ENCODE measurements at regions of chr2 and their contacts with region 1.

Region 1: DNA sequence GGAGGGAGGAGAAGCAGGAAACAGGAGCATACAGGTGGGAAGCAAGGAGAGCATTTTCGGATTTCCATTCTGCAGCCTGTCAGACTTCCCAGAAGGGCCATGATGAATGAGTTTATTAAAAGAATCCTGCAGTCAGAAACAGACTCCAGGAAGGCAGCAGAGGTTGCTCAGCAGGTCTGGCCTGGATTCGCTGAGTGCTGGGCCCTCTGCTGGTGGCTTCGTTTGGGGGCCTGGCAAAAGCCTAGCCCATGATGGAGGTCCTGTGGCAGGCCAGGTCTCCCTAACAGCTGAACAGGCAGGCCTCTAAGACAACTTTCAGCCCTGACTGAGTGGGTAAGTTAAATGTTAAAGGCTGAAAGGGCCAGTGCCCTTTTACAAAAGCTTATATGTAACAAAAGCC is 108.2 kb upstream of the CAPN13 start:
- DNase-seq: peak; percentile 77
- H3K4me3 ChIP-seq: no peak overlapping the region
- H3K27ac ChIP-seq: peak overlapping the region in 1 of 2 experiments; percentile 71; a peak in 2 of 4 replicates
- H3K4me1 ChIP-seq: peaks cover 0 to 11% of the 10 kb centered on the region in 2 experiments; a peak in 1 of 4 replicates
- H3K27me3 ChIP-seq: no peaks in the 10 kb centered on the region
- CTCF ChIP-seq: peak; percentile 22; the same call in 1 of the 2 replicates
- EP300 ChIP-seq: 0 out of 4 replicates have a peak, but pooled peaks of 1 of the 2 experiments have one; percentile 21
- RAD21 ChIP-seq: peak; percentile 71

Region 2: DNA sequence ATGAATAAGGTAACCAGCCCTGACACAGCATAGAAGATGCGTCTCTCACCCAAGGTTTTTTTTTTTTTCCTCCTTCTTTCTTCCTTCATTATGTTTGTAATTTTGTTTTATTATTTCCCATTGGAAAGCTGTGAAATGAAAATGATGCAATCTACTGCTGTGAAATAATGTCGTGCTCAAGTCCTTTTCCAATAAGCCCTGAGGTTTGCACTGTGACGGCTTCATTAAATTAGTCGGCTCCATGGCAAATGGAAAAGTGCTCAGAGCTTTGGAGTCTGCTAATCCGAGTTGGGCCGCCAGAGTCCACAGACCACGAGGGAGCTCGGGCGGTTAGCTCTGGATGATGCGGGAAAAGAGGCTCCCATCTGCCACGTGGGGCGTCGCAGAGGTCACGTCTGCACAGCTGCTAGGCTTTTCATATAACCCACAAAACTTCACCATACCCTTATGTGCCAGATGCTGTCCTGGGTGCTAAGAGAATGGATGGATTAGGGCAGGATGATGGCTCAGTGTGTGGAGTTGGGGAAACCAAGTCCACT is 15.9 kb before region 1 on chr2:
- CTCF ChIA-PET with region 1: interaction called, 18 read pairs
- POLR2A ChIA-PET with region 1: no interaction called
- DNase-seq: no peak
- H3K4me3 ChIP-seq: no peak overlapping the region
- H3K27ac ChIP-seq: no peak overlapping the region
- H3K4me1 ChIP-seq: no peaks in the 10 kb centered on the region; a peak in 1 of 4 replicates
- H3K27me3 ChIP-seq: no peaks in the 10 kb centered on the region
- CTCF ChIP-seq: no peak
- EP300 ChIP-seq: no peak
- RAD21 ChIP-seq: no peak

Measured in SK-N-SH (cell line).